ENCODE measurements at regions of chr11 and their contacts with region 1.

Region 1: DNA sequence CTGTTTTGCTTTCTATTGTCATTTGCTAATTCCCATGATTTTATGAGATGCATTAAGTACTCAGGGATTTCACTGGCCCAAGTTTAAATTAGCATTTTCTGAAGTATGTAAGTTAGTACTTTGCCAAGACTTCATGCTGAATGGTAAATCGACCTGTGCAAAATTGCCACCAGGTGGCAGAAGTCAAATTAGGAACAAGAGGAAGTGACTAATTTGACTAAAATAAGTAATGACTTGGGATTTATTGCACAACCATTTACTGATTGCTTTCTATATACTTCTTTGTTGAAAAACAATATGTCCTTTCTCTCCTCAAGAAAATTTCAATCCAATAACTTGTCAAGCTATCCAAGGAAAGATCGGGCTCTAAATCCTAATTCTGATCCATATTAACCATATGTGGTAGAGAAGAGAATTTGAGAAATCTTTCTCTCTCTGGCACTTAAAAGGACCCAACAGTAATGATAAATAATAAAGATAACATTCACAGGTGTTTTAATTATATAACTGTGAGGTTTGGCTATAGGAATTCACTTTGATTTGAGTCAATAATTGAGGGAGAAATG is 253.7 kb upstream of the CHORDC1 start:
- DNase-seq: peak; percentile 59
- ATAC-seq: peak; percentile 39
- H3K4me3 Mint-ChIP-seq: no peak overlapping the region
- H3K27ac Mint-ChIP-seq: no peak overlapping the region
- H3K4me1 Mint-ChIP-seq: no peaks in the 10 kb centered on the region
- H3K27me3 Mint-ChIP-seq: peaks cover 4% of the 10 kb centered on the region

Region 2: GRCh38 chr11:90493379-90493778 is 16.9 kb after region 1 on chr11:
- CTCF ChIA-PET with region 1: no interaction called
- POLR2A ChIA-PET with region 1: no interaction called
- intact Hi-C with region 1: no loop called
- DNase-seq: no peak
- ATAC-seq: no peak
- H3K4me3 Mint-ChIP-seq: no peak overlapping the region
- H3K27ac Mint-ChIP-seq: no peak overlapping the region
- H3K4me1 Mint-ChIP-seq: no peaks in the 10 kb centered on the region
- H3K27me3 Mint-ChIP-seq: no peaks in the 10 kb centered on the region

Region 3: DNA sequence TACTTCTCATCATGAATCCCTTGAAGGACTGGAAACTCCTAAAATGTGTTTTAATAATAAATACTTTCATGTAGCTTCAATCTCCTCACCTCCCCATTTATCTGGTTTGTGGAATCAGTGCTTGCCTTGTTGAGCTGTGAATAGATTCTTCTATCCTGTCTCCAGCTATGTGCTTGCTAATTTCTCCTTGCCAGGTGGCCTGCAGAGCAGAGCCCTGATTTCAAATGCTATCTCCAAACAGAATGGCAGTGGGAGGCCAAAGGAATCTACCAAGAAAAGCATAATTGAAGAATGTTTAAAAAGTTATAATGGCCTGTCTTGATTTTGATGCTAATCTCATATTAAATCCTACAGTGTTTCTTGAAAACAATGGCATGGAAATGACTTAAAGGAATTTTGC is 55.6 kb after region 1 on chr11:
- CTCF ChIA-PET with region 1: no interaction called
- POLR2A ChIA-PET with region 1: interaction called, 12 read pairs
- intact Hi-C with region 1: no loop called
- DNase-seq: no peak
- ATAC-seq: no peak
- H3K4me3 Mint-ChIP-seq: no peak overlapping the region
- H3K27ac Mint-ChIP-seq: no peak overlapping the region
- H3K4me1 Mint-ChIP-seq: no peaks in the 10 kb centered on the region
- H3K27me3 Mint-ChIP-seq: no peaks in the 10 kb centered on the region

Measured in activated CD4-positive, alpha-beta T cell treated with anti-CD3 and anti-CD28 coated beads for 36 hours (primary cell).